ENCODE measurements at regions of chr3 and their contacts with region 1.

Region 1: DNA sequence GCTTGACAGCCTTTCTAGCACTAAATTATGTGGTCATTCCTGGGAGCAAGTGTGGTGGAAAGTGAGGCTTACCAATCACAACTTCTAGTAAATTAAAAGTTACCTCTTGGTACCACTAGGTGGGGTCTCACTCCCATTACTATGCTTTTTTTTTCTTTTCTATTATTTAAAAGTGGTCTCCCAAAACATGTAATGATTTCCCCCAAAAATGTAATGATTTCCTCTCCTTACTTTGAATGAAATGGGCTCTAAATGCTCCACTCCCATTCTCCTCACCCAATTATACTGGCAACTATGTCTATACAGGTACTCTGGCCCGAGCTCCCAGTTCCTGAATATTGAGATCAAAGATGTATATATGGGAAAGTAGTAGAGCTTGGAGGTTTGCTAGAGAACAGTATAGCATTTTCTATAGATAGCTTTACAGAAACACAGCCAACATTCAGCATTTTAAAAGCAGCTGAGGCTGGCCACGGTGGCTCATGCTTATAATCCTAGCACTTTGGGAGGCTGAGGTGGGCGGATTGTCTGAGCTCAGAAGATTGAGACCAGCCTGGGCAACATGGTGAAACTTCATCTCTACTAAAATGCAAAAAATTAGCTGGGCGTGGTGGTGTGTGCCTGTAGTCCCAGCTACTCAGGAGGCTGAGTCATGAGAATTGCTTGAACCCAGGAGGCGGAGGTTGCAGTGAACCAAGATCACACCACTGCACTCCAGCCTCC is 70.9 kb downstream of the DCUN1D1 start:
- DNase-seq: peak in 2 of 5 donors; percentile 16 to 23
- H3K4me3 ChIP-seq: no peak overlapping the region
- H3K4me3 Mint-ChIP-seq: no peak overlapping the region
- H3K27ac ChIP-seq: no peak overlapping the region
- H3K27ac Mint-ChIP-seq: peak overlapping the region in 4 of 7 donors; percentile 8 to 62 (median 28)
- H3K4me1 ChIP-seq: peaks cover 41% of the 10 kb centered on the region
- H3K4me1 Mint-ChIP-seq: peaks cover 30 to 53% (median 41%) of the 10 kb centered on the region in 4 donors
- H3K27me3 ChIP-seq: no peaks in the 10 kb centered on the region
- H3K27me3 Mint-ChIP-seq: no peaks in the 10 kb centered on the region

Region 2: DNA sequence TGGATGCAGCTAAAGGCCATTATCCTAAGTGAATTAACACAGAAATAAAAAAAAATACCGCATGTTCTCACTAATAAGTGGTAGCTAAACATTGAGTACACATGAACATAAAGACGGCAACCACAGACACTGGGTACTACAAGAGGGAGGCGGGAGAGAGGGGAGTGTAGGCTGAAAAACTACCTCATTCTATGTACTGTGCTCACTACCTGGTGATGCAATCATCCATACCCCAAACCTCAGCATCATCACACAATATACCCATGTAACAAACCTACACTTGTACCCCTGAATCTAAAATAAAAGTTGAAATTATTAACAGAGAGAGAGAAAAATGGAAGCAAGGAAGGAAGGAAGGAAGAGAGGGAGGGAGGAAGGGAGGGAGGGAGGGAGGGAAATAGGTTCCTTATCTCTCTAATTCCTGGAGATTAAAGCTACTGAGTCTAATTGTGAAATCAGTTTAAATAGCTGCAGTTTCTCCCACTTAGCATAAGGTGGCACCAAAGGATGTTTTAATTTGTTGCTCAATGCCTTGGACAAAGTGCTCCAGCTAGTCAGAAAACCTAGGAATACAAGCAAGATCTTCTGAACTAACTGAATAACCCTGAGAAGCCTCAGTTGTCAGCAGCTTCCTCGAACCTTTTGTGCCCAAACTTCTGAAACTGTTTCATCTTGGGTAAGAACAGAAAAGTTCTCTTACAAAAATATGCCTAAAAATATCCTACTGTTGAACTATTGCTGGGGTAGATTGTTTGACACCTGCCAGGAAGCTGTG is 195.5 kb before region 1 on chr3:
- CTCF ChIA-PET with region 1: interaction called, 7 read pairs
- POLR2A ChIA-PET with region 1: no interaction called
- intact Hi-C with region 1: loop called (anchors 5 kb)
- DNase-seq: peak in 4 of 5 donors; percentile 25 to 41 (median 28)
- H3K4me3 ChIP-seq: no peak overlapping the region
- H3K4me3 Mint-ChIP-seq: no peak overlapping the region
- H3K27ac ChIP-seq: no peak overlapping the region
- H3K27ac Mint-ChIP-seq: no peak overlapping the region
- H3K4me1 ChIP-seq: no peaks in the 10 kb centered on the region
- H3K4me1 Mint-ChIP-seq: peaks cover 0 to 2% (median under 1%) of the 10 kb centered on the region in 4 donors
- H3K27me3 ChIP-seq: no peaks in the 10 kb centered on the region
- H3K27me3 Mint-ChIP-seq: no peaks in the 10 kb centered on the region

Region 3: GRCh38 chr3:182729903-182730674 is 179.4 kb before region 1 on chr3:
- CTCF ChIA-PET with region 1: no interaction called
- POLR2A ChIA-PET with region 1: no interaction called
- intact Hi-C with region 1: no loop called
- DNase-seq: no peak
- H3K4me3 ChIP-seq: no peak overlapping the region
- H3K4me3 Mint-ChIP-seq: no peak overlapping the region
- H3K27ac ChIP-seq: no peak overlapping the region
- H3K27ac Mint-ChIP-seq: no peak overlapping the region
- H3K4me1 ChIP-seq: no peaks in the 10 kb centered on the region
- H3K4me1 Mint-ChIP-seq: peaks cover 0 to 2% (median 0%) of the 10 kb centered on the region in 4 donors
- H3K27me3 ChIP-seq: no peaks in the 10 kb centered on the region
- H3K27me3 Mint-ChIP-seq: peaks cover 15 to 18% of the 10 kb centered on the region in 2 donors

Region 4: GRCh38 chr3:182967218-182968204 is 58.0 kb after region 1 on chr3:
- CTCF ChIA-PET with region 1: interaction called, 3 read pairs
- POLR2A ChIA-PET with region 1: interaction called, 6 read pairs
- intact Hi-C with region 1: loop called (anchors 10 kb)
- DNase-seq: peak in 4 of 5 donors; percentile 24 to 39 (median 38)
- H3K4me3 ChIP-seq: no peak overlapping the region
- H3K4me3 Mint-ChIP-seq: peak overlapping the region in 6 of 8 donors; percentile 21 to 82 (median 60)
- H3K27ac ChIP-seq: no peak overlapping the region
- H3K27ac Mint-ChIP-seq: peak overlapping the region; percentile 15 to 95 (median 68)
- H3K4me1 ChIP-seq: peaks cover 58% of the 10 kb centered on the region
- H3K4me1 Mint-ChIP-seq: peaks cover 43 to 55% (median 51%) of the 10 kb centered on the region in 4 donors
- H3K27me3 ChIP-seq: no peaks in the 10 kb centered on the region
- H3K27me3 Mint-ChIP-seq: no peaks in the 10 kb centered on the region

Region 5: GRCh38 chr3:183038221-183038620 is 128.7 kb after region 1 on chr3:
- CTCF ChIA-PET with region 1: interaction called, 3 read pairs
- POLR2A ChIA-PET with region 1: no interaction called
- intact Hi-C with region 1: loop called (anchors 10 kb)
- DNase-seq: no peak
- H3K4me3 ChIP-seq: no peak overlapping the region
- H3K4me3 Mint-ChIP-seq: no peak overlapping the region
- H3K27ac ChIP-seq: no peak overlapping the region
- H3K27ac Mint-ChIP-seq: peak overlapping the region in 1 of 7 donors; percentile 39
- H3K4me1 ChIP-seq: no peaks in the 10 kb centered on the region
- H3K4me1 Mint-ChIP-seq: no peaks in the 10 kb centered on the region
- H3K27me3 ChIP-seq: no peaks in the 10 kb centered on the region
- H3K27me3 Mint-ChIP-seq: no peaks in the 10 kb centered on the region